ENCODE measurements at regions of chr18 and their contacts with region 1.

Region 1: DNA sequence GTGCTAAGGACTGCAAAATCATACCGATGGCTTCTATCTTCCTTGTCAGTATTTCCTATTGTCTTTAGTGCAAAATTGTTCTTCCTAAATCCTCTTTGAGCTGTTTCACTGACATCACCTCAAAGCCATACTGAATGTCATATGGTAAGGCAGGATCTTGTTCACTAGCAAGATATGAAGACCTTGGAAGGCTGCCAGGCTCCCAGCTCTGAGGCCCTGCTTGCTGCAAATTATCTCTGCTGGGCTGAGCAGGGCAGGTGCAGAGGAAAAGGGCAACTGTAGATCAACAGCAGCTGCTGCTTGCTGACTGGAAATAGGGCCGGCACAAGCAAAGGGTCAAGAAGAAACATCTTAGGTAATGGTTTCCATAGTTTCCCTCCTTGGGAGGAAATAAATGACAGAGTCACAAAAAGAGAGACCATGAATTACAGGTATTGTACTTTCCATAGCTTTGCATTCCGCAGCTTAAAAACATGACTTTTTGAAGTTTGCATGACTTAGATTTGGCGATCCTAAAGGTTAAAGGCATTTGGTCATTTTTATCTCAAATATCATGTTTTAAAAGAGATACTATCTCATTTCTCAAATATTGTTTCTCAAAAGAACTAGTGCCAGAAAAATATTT is 58.3 kb downstream of the PMAIP1 start:
- DNase-seq: no peak
- ATAC-seq: peak; percentile 43
- H3K4me3 ChIP-seq: no peak overlapping the region
- H3K27ac ChIP-seq: peak overlapping the region; percentile 10; the same call in 1 of the 2 replicates
- H3K4me1 ChIP-seq: peaks cover 50% of the 10 kb centered on the region
- H3K27me3 ChIP-seq: no peaks in the 10 kb centered on the region
- CTCF ChIP-seq: no peak
- EP300 ChIP-seq: no peak
- POLR2A ChIP-seq: no peak
- RAD21 ChIP-seq: no peak

Region 2: DNA sequence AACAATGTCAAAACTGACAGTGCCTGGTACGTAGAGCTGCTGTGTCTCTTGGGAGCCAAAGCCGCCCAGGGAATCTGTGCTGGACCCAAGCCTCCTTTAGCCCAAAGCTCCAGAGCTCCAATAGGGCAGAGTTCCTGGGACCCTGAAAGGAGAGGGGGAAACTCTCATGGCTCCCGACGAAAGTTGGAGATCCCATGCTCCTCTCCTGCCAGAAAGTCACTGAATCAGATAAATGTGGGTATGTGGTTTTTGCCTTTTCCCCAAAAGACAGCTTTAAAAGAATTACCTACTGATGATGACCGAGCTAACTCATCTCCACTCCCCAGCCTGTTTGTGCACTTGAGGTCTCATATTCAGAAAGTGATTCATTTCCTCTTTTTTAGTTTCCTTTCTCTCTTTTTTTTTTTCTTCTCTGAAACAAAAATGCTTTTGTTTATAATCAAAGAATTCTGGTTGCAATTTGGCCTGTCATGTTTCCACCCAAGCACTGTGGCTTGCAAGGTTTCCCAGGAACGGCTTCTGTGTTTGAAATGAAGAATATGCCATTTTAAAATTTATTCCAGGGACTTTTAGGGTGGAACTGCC is 72.4 kb before region 1 on chr18:
- CTCF ChIA-PET with region 1: interaction called, 3 read pairs
- POLR2A ChIA-PET with region 1: interaction called, 8 read pairs
- RAD21 ChIA-PET with region 1: interaction called, 15 read pairs
- SMC1A ChIA-PET with region 1: interaction called, 9 read pairs
- in situ Hi-C with region 1: no loop called
- intact Hi-C with region 1: no loop called
- DNase-seq: peak; percentile 78
- ATAC-seq: peak; percentile 86
- H3K4me3 ChIP-seq: peak overlapping the region; percentile 63
- H3K27ac ChIP-seq: peak overlapping the region; percentile 91
- H3K4me1 ChIP-seq: peaks cover 38% of the 10 kb centered on the region
- H3K27me3 ChIP-seq: no peaks in the 10 kb centered on the region
- CTCF ChIP-seq: no peak
- EP300 ChIP-seq: peak; percentile 88 to 95
- POLR2A ChIP-seq: no peak
- RAD21 ChIP-seq: 0 out of 2 replicates have a peak, but pooled peaks have one; percentile 4

Region 3: GRCh38 chr18:59927246-59927825 is 30.7 kb before region 1 on chr18:
- CTCF ChIA-PET with region 1: interaction called, 15 read pairs
- POLR2A ChIA-PET with region 1: interaction called, 23 read pairs
- RAD21 ChIA-PET with region 1: interaction called, 54 read pairs
- SMC1A ChIA-PET with region 1: interaction called, 257 read pairs
- in situ Hi-C with region 1: no loop called
- intact Hi-C with region 1: loop called (anchors 1 kb)
- DNase-seq: peak; percentile 98
- ATAC-seq: peak; percentile 82
- H3K4me3 ChIP-seq: no peak overlapping the region
- H3K27ac ChIP-seq: peak overlapping the region; percentile 93
- H3K4me1 ChIP-seq: peaks cover 49% of the 10 kb centered on the region
- H3K27me3 ChIP-seq: no peaks in the 10 kb centered on the region
- CTCF ChIP-seq: no peak
- EP300 ChIP-seq: peak; percentile 63 to 67; a peak in 3 of 4 replicates
- POLR2A ChIP-seq: no peak
- RAD21 ChIP-seq: no peak

Region 4: DNA sequence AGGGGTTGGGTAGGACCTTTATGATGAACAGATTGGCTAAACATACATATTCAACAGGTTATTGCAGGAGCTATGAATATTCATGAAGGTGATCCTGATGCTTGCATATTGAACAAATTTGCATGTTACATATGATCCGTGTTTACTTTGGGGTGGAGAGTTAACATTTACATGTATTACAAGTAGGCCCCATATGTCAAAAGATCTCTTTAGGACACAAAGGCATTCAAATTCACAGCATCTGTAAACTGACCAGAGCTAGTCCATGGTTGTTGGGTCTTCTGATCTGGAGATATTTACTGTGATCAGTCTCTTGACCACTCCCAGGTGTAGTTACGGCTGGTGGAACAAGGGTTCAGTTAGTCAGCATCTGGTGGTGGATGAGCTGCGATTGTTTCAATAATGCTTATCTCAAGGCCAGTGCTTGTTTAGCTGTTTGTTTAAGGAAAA is 22.1 kb after region 1 on chr18:
- CTCF ChIA-PET with region 1: interaction called, 4 read pairs
- POLR2A ChIA-PET with region 1: interaction called, 3 read pairs
- RAD21 ChIA-PET with region 1: interaction called, 11 read pairs
- SMC1A ChIA-PET with region 1: interaction called, 7 read pairs
- in situ Hi-C with region 1: no loop called
- intact Hi-C with region 1: no loop called
- DNase-seq: no peak
- ATAC-seq: no peak
- H3K4me3 ChIP-seq: no peak overlapping the region
- H3K27ac ChIP-seq: no peak overlapping the region
- H3K4me1 ChIP-seq: no peaks in the 10 kb centered on the region
- H3K27me3 ChIP-seq: no peaks in the 10 kb centered on the region
- CTCF ChIP-seq: no peak
- EP300 ChIP-seq: no peak
- POLR2A ChIP-seq: no peak
- RAD21 ChIP-seq: no peak